ENCODE measurements at regions of chr5 and their contacts with region 1.

Region 1: DNA sequence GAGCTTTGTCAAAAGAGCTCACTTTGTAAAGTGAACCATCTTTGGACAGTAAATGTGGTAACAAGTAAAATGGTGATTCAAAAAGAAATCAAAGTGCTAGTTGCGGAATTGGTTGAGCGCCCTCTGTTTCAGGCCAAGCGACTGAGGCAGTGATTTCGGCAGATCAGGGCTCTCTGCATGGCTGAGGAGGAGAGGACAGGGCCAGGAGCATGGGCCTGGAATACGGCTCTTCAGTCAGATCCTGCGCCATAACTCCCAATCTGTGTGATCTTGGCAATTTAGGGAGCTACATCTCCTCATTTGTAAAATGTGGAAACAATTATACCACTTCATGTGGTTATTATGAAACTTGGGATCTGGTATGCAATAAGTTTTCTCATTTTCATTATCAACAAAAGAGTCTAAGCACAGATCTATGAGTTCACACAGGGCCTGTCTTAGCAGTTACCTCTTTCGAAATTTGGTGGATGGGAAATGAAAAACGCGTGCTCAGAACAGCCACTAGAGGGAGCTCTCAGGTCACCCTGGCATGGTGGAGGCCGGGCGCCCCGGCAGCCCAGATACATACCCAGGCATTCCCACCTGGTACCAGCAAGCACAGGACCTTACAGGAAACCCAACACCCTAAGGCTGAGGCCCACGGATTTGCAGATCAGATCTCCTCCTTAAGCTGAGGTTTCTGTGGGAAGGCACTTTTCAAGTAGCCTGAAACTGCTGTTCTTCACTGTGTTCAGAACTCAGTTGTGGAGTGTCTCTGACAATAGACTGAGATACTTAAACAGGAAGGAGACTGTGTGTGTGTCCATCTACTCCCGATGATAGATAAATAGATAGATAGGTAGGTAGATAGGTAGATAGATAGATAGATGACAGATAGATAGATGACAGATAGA is 303.7 kb downstream of the RAB3C start:
- DNase-seq: peak; percentile 77 to 93
- ATAC-seq: peak; percentile 27 to 68
- H3K4me3 ChIP-seq: no peak overlapping the region
- H3K27ac ChIP-seq: peak overlapping the region; percentile 94 to 100
- H3K4me1 ChIP-seq: peaks cover 50% of the 10 kb centered on the region
- CTCF ChIP-seq: peak; percentile 96
- EP300 ChIP-seq: no peak
- POLR2A ChIP-seq: no peak
- RAD21 ChIP-seq: peak; percentile 96 to 97

Region 2: GRCh38 chr5:58871648-58872242 is 14.8 kb before region 1 on chr5:
- CTCF ChIA-PET with region 1: interaction called, 58 read pairs
- POLR2A ChIA-PET with region 1: no interaction called
- DNase-seq: peak; percentile 44 to 69
- ATAC-seq: peak in 1 of 2 experiments; percentile 80; a peak in 3 of 6 replicates
- H3K4me3 ChIP-seq: no peak overlapping the region
- H3K27ac ChIP-seq: peak overlapping the region in 1 of 2 experiments; percentile 17; a peak in 1 of 6 replicates
- H3K4me1 ChIP-seq: no peaks in the 10 kb centered on the region
- CTCF ChIP-seq: peak; percentile 74
- EP300 ChIP-seq: no peak
- POLR2A ChIP-seq: no peak
- RAD21 ChIP-seq: peak; percentile 52 to 60; a peak in 4 of 5 replicates

Region 3: GRCh38 chr5:58940446-58940845 is 53.9 kb after region 1 on chr5:
- CTCF ChIA-PET with region 1: interaction called, 12 read pairs
- POLR2A ChIA-PET with region 1: no interaction called
- DNase-seq: no peak
- ATAC-seq: peak in 1 of 2 experiments; percentile 20; a peak in 3 of 6 replicates
- H3K4me3 ChIP-seq: no peak overlapping the region
- H3K27ac ChIP-seq: peak overlapping the region; percentile 23 to 68; a peak in 4 of 6 replicates
- H3K4me1 ChIP-seq: peaks cover 7% of the 10 kb centered on the region; the same call in 2 of the 3 replicates
- CTCF ChIP-seq: no peak
- EP300 ChIP-seq: no peak
- POLR2A ChIP-seq: no peak
- RAD21 ChIP-seq: no peak

Region 4: GRCh38 chr5:58983526-58984452 is 97.2 kb after region 1 on chr5:
- CTCF ChIA-PET with region 1: interaction called, 21 read pairs
- POLR2A ChIA-PET with region 1: interaction called, 6 read pairs
- DNase-seq: no peak
- ATAC-seq: peak in 1 of 2 experiments; percentile 4; a peak in 3 of 6 replicates
- H3K4me3 ChIP-seq: no peak overlapping the region
- H3K27ac ChIP-seq: peak overlapping the region; percentile 9 to 64; a peak in 4 of 6 replicates
- H3K4me1 ChIP-seq: peaks cover 100% of the 10 kb centered on the region
- CTCF ChIP-seq: no peak
- EP300 ChIP-seq: no peak
- POLR2A ChIP-seq: no peak
- RAD21 ChIP-seq: no peak

Region 5: DNA sequence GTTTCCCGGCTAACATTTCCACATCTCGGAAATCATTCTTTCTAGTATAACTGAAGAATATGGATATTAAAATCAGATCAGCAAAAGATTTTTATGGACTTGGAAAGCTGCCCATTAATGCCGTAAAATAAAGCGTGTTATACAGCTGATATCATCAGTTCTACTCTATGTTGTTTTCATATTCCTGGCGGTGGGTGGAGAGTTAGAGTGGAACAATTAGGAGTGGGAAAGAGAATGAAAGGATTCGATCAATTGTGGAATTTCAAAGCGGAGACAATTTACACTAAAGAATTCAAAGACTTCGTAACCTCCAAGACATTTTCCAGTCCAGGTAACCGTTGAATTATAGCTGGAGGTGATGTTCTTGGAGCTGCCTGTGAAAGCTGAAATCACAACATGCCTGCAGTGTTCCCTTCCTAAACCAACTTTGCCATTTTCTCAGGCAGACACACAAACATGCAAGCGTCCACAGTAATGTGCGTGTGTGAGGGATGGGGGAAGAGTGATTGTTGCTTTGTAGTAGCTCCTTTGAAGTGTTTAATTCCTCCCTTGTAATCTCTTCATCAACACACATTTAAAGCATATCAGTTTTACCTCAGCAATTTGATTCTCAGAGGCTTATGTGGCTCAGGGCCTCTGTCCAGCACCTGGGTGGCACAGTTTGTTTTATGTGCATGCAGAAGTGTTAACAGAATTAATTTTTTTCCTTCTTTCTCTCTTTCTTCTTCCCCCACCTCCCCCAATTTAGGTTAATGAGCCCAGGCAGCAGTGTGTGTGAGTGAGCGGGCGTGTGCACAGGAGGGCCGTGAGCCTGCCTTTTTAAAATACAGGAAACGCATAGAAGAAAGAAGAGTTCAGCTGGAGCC is 240.4 kb after region 1 on chr5:
- CTCF ChIA-PET with region 1: interaction called, 9 read pairs
- POLR2A ChIA-PET with region 1: interaction called, 17 read pairs
- DNase-seq: peak in 1 of 2 experiments; percentile 87
- ATAC-seq: peak; percentile 30 to 57
- H3K4me3 ChIP-seq: peak overlapping the region; percentile 0; the same call in 1 of the 3 replicates
- H3K27ac ChIP-seq: peak overlapping the region; percentile 94 to 100
- H3K4me1 ChIP-seq: peaks cover 94% of the 10 kb centered on the region
- CTCF ChIP-seq: no peak
- EP300 ChIP-seq: no peak
- POLR2A ChIP-seq: no peak
- RAD21 ChIP-seq: no peak

Region 6: DNA sequence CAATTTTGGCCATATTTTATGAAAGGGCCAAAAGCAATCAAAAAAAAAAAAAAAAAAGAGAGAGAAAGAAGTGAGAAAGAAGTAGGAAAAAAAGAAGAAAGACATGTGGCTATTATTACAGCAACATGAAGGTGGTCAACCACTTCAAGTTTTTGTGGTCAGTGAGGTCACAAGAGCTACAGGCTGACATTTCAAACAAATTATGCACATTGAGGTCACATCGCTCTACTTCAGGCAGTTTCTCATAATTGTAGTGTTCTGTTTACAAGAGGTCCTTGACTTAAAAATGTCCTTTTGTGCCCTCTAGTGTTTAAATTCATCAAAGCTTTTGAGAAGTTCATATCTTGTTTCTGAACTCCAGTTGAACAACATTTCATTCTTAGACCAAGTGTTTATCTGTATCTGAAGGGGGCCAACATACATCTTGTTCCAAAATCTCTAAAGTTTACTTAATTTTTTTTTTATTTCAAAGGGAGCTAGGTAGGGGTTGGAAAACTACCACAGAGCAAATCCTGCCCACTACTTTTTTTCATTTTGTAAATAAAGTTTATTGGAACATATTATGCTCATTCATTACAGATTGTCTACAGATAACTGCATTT is 493.9 kb after region 1 on chr5:
- CTCF ChIA-PET with region 1: interaction called, 10 read pairs
- POLR2A ChIA-PET with region 1: no interaction called
- DNase-seq: peak in 1 of 2 experiments; percentile 92
- ATAC-seq: peak; percentile 84 to 86
- H3K4me3 ChIP-seq: no peak overlapping the region
- H3K27ac ChIP-seq: peak overlapping the region; percentile 45 to 73
- H3K4me1 ChIP-seq: peaks cover 58% of the 10 kb centered on the region
- CTCF ChIP-seq: peak; percentile 66
- EP300 ChIP-seq: no peak
- POLR2A ChIP-seq: no peak
- RAD21 ChIP-seq: peak; percentile 78 to 83